Sciatic nerve (tissue), 2 donors: ENCODE measurements at regions of chr15 and their contacts with region 1.

Region 1: GRCh38 chr15:54594115-54594514 is 602.6 kb downstream of the RSL24D1 start:
- DNase-seq: no peak
- ATAC-seq: no peak

Region 2: DNA sequence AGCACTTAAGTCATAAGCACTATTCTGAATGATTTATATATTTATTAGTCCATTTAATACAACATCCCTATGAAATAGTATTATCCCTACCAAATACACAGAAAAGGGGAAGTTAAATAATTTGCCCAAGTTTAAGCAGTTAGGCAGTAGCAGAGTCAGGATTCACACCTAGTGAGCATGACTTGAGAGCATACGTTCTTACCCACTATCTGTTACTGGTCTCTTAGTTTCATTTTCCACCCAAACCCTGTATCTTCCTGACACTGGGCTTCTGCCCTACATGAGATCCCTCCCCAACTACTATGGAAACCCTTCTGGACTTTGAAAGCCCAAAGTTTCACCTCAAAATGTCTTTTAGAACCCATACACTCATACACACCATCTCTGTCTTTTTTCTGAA is 1910.5 kb before region 1 on chr15:
- intact Hi-C with region 1: no loop called
- DNase-seq: no peak
- ATAC-seq: no peak

Region 3: GRCh38 chr15:54298396-54298795 is 295.7 kb before region 1 on chr15:
- intact Hi-C with region 1: no loop called
- DNase-seq: no peak
- ATAC-seq: no peak

Region 4: DNA sequence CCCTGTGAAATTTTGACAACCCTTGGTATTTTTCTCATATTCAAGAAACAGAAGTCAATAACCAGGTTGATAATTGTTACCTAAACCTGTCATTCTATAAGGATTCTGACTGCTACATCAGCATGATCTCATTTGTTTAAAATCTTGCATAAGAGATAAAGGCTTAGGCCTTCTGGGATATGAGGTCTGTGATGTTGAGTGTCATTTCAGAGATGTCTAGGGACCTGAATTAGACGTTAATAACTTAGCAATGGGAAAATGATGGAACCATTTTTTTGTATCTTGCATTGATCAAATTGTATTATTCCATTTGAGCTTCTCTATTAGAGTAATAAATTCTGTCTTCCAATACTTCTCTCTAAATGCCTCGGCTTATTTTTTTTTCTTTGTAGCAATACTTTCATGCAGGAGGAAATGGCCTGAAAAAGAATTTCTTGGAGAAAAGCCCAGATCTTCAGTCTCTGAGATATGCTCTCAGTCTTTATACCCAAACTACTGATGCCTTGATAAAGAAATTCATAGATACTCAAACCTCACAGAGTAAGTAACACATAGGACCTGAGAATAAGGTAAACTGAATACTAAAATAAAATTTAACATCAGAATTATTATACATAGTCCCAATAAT is 26.6 kb before region 1 on chr15:
- intact Hi-C with region 1: no loop called
- DNase-seq: no peak
- ATAC-seq: no peak

Region 5: DNA sequence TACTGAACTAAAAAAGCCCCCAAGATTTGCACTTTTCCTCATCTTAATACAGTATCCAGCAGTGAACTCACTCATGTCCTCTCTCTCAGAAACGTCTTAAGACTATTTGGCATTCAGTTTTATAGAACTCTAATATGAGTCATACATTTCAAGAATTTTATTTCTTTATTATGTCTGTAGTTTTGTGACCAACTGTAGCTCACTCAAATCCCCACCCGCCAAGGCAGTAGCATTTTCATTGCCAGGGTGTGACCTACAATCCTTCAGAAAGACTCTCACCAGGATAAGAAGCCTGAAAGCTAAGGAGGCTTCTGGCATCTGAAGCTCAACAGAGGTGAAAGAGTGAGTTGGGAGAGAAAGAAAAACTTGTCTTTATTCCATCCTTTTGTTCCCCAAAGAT is 65.5 kb after region 1 on chr15:
- intact Hi-C with region 1: loop called (anchors 10 kb)
- DNase-seq: no peak
- ATAC-seq: no peak